Prostate gland (tissue), 2 donors: ENCODE measurements at regions of chr1 and their contacts with region 1.

Region 1: GRCh38 chr1:96236156-96236739 is 485.3 kb upstream of the PTBP2 start:
- DNase-seq: peak; percentile 12
- H3K4me3 ChIP-seq: no peak overlapping the region
- H3K27ac ChIP-seq: no peak overlapping the region
- H3K4me1 ChIP-seq: no peaks in the 10 kb centered on the region
- H3K27me3 ChIP-seq: no peaks in the 10 kb centered on the region
- CTCF ChIP-seq: peak; percentile 14 to 61 (median 56)
- POLR2A ChIP-seq: no peak

Region 2: DNA sequence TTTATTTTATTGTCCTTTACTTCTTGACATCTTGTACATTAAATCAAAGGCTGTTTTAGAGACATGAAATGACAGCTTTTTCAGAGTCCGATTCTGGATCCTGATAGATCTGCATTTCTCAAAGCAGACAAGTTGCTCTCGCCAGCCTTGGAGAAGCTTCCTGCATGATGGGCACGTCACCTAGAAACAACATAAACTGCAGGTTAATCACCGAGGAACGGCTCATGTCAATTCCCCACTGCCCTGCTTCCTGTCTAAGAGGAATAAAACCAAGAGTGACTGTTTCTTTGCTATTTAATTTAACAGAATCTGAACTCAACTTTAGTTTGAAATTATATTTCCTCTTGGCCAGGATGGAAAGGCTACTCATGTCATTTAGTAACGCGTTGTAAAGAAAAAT is 925.2 kb before region 1 on chr1:
- intact Hi-C with region 1: loop called (anchors 10 kb)
- DNase-seq: no peak
- H3K4me3 ChIP-seq: no peak overlapping the region
- H3K27ac ChIP-seq: peak overlapping the region in 1 of 2 donors; percentile 16
- H3K4me1 ChIP-seq: peaks cover 4% of the 10 kb centered on the region
- H3K27me3 ChIP-seq: no peaks in the 10 kb centered on the region
- CTCF ChIP-seq: no peak
- POLR2A ChIP-seq: no peak

Region 3: DNA sequence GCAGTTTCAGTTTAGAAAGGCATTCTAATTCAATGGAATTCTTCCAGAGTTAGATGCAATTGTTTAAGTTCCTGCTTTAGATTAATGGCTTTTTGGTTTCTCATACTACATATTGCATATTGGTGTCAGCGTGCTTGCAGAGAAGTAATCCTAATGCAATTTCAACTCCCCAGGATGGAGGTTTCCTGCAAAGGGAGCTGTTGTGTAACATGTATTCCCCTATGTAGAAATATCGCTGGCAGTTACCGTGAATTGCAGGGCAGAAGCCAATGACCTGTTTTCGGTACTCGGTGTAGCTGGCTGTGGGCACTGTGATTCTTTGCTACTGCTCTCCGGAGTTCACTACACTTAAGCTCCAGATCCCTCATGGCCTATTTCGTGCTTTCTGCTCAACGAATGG is 229.2 kb after region 1 on chr1:
- intact Hi-C with region 1: no loop called
- DNase-seq: no peak
- H3K4me3 ChIP-seq: no peak overlapping the region
- H3K27ac ChIP-seq: no peak overlapping the region
- H3K4me1 ChIP-seq: no peaks in the 10 kb centered on the region
- H3K27me3 ChIP-seq: no peaks in the 10 kb centered on the region
- CTCF ChIP-seq: no peak
- POLR2A ChIP-seq: no peak

Region 4: DNA sequence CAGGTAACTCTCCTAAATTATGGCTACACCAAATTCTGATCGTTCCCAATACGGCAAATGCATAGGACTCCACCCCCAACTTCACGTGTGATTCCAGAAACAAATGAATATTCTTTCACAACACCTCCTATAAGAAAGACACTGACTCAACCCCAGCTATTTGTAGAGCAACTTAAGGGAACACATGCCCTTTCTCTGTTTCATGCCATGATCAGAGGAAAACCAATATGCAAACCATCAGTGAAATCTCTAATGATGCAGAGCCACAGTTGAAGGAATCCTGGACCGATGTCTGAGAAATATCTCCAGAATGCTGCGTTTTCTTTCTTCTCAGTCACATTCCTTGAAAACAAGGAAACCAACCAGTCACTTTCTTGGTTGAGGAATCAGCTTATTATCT is 321.1 kb after region 1 on chr1:
- intact Hi-C with region 1: no loop called
- DNase-seq: no peak
- H3K4me3 ChIP-seq: no peak overlapping the region
- H3K27ac ChIP-seq: no peak overlapping the region
- H3K4me1 ChIP-seq: no peaks in the 10 kb centered on the region
- H3K27me3 ChIP-seq: no peaks in the 10 kb centered on the region
- CTCF ChIP-seq: no peak
- POLR2A ChIP-seq: no peak

Region 5: DNA sequence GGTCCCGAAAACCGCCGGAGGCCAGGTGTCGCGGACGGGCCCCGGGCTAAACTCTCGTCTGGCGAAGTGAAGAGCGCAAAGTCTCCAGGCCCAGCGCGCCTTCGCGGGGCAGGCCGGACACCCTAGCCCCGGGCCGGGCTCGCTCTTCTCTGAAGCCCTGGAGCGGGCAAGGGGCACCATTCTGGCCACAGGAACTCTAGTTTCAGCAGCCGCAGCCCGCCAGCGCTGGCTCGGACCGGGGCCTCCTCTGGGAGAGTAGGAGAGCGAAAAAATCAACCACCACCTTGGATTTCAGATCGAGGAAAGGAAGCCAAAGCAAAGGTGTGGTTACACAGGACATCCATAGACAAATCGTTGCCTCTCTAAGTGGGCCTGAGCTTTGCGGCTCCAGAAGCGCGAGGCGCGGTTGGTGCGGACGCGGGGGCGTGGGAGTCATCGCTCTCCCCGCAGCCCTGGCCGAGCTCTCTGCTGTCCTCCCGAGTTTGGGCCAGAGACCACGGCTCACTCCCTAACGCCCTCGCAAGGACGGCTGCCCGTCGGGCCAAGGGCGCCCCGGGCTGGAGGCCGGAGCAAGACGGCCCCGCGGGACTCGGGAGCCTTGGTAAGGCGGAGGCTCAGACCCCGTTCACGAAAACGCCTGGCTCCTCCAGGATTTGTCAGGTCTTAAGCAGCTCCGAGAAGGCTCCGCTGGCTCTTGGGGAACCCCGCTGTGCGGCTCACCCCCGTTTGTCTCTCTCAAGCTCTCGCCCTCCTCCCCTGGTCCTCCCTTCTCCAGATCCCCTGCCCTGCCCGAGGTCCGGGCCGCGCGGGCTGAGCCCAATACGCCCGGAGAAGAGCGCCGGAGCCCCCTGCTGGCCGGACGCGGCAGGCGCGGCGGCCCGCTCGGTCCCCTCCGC is 1817.5 kb after region 1 on chr1:
- intact Hi-C with region 1: loop called (anchors 10 kb)
- DNase-seq: peak; percentile 17
- H3K4me3 ChIP-seq: peak overlapping the region; percentile 26 to 33
- H3K27ac ChIP-seq: no peak overlapping the region
- H3K4me1 ChIP-seq: no peaks in the 10 kb centered on the region
- H3K27me3 ChIP-seq: peaks cover 8% of the 10 kb centered on the region
- CTCF ChIP-seq: peak; percentile 69 to 77 (median 74)
- POLR2A ChIP-seq: no peak